Heart left ventricle (tissue), 16 donors: ENCODE measurements at regions of chr13 and their contacts with region 1.

Region 1: GRCh38 chr13:35164324-35164932 is 222.4 kb downstream of the NBEA start:
- DNase-seq: no peak
- ATAC-seq: peak in 3 of 4 donors; percentile 53 to 68 (median 61)
- H3K4me3 ChIP-seq: no peak overlapping the region
- H3K27ac ChIP-seq: no peak overlapping the region
- H3K4me1 ChIP-seq: peaks cover 0 to 11% (median 0%) of the 10 kb centered on the region in 12 donors
- H3K27me3 ChIP-seq: no peaks in the 10 kb centered on the region
- CTCF ChIP-seq: peak; percentile 39 to 77 (median 66)
- POLR2A ChIP-seq: no peak

Region 2: GRCh38 chr13:33931397-33932311 is 1232.8 kb before region 1 on chr13:
- intact Hi-C with region 1: loop called in 8 of 10 experiments (anchors 2 to 10 kb)
- DNase-seq: peak in 1 of 5 donors; percentile 20
- ATAC-seq: peak in 3 of 4 donors; percentile 79 to 87 (median 84)
- H3K4me3 ChIP-seq: no peak overlapping the region
- H3K27ac ChIP-seq: no peak overlapping the region
- H3K4me1 ChIP-seq: peaks cover 0 to 12% (median 0%) of the 10 kb centered on the region in 12 donors
- H3K27me3 ChIP-seq: no peaks in the 10 kb centered on the region
- CTCF ChIP-seq: peak; percentile 26 to 71 (median 57)
- POLR2A ChIP-seq: no peak

Region 3: GRCh38 chr13:35016362-35017112 is 147.9 kb before region 1 on chr13:
- intact Hi-C with region 1: no loop called
- DNase-seq: no peak
- ATAC-seq: no peak
- H3K4me3 ChIP-seq: no peak overlapping the region
- H3K27ac ChIP-seq: peak overlapping the region in 1 of 12 donors; percentile 27
- H3K4me1 ChIP-seq: peaks cover 0 to 12% (median 0%) of the 10 kb centered on the region in 12 donors
- H3K27me3 ChIP-seq: no peaks in the 10 kb centered on the region
- CTCF ChIP-seq: no peak
- POLR2A ChIP-seq: no peak

Region 4: GRCh38 chr13:35345992-35346391 is 181.6 kb after region 1 on chr13:
- intact Hi-C with region 1: no loop called
- DNase-seq: no peak
- ATAC-seq: no peak
- H3K4me3 ChIP-seq: no peak overlapping the region
- H3K27ac ChIP-seq: no peak overlapping the region
- H3K4me1 ChIP-seq: peaks cover 0 to 11% (median 0%) of the 10 kb centered on the region in 12 donors
- H3K27me3 ChIP-seq: no peaks in the 10 kb centered on the region
- CTCF ChIP-seq: no peak
- POLR2A ChIP-seq: no peak

Region 5: DNA sequence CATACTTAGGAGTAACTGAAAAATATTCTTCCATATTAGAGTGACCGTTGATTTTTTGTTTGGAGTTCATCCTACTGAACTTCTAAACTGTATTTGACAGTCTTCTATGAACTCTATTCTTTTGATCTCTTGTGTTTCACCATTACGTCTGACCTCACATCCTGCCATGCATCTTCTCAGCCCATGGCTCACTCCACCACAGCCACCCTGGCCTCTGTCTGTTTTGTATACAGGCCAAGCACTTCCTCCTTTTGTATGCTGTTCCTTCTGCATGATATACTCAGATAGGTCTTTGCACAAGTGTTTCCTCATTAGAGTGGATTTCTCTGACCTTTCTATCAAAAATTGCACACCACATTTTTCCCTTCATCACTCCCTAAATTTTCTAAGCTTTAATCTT is 192.1 kb after region 1 on chr13:
- intact Hi-C with region 1: no loop called
- DNase-seq: no peak
- ATAC-seq: peak in 1 of 4 donors; percentile 44
- H3K4me3 ChIP-seq: no peak overlapping the region
- H3K27ac ChIP-seq: no peak overlapping the region
- H3K4me1 ChIP-seq: no peaks in the 10 kb centered on the region
- H3K27me3 ChIP-seq: no peaks in the 10 kb centered on the region
- CTCF ChIP-seq: no peak
- POLR2A ChIP-seq: no peak

Region 6: DNA sequence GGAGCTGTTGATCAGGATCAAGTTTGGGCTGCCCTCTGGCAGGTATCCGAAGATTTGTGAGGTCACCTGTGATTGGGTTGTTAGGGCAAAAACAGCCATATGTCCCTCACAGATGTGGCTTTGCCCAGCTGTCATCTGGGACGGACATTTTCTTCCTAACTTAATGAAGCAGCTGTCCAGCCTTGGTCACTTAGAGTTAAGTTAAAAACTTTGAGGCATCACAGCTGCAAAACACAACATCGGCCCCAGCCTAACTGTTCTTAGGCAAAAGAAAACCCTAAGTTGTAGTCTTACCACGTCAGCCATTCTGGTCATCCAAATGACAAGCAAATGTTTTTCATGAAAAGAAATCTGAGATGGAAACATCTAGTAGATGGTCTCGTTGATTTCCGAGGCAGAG is 648.3 kb after region 1 on chr13:
- intact Hi-C with region 1: no loop called
- DNase-seq: no peak
- ATAC-seq: no peak
- H3K4me3 ChIP-seq: no peak overlapping the region
- H3K27ac ChIP-seq: no peak overlapping the region
- H3K4me1 ChIP-seq: no peaks in the 10 kb centered on the region
- H3K27me3 ChIP-seq: no peaks in the 10 kb centered on the region
- CTCF ChIP-seq: no peak
- POLR2A ChIP-seq: no peak